Right ventricle myocardium inferior (tissue), 1 donor: ENCODE measurements at regions of chr7 and their contacts with region 1.

Region 1: GRCh38 chr7:4883374-4884144 is at the start of gene RADIL:
- DNase-seq: peak; percentile 94
- ATAC-seq: peak; percentile 96
- total RNA-seq, gene RADIL: 3.9 TPM

Region 2: GRCh38 chr7:4797858-4798705 is 85.5 kb before region 1 on chr7:
- intact Hi-C with region 1: loop called (anchors 1 kb)
- DNase-seq: peak; percentile 88
- ATAC-seq: peak; percentile 67

Region 3: GRCh38 chr7:4837803-4838625 is 45.5 kb before region 1 on chr7:
- intact Hi-C with region 1: loop called (anchors 5 kb)
- DNase-seq: no peak
- ATAC-seq: peak; percentile 29

Region 4: DNA sequence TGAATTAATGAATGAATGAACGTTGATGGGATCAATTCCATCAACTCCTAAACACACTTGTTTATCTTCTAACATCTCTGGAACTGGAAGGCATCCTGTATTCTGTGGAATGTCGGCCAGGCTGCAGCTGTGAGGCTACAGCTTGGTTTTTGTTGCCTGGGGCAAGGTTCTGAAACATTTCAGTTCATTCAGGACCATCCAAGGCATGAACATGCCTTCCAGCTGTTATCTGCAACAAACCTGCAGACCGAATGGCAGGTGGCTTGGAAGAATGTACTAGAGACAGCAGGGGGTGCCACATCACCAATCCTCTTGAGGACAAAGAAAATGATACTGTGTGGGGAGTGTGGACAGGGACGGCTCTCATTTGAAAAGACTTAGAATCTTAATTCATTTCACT is 34.2 kb before region 1 on chr7:
- intact Hi-C with region 1: no loop called
- DNase-seq: no peak
- ATAC-seq: no peak